Endothelial cell of umbilical vein (primary cell): ENCODE measurements at regions of chr9 and their contacts with region 1.

Region 1: DNA sequence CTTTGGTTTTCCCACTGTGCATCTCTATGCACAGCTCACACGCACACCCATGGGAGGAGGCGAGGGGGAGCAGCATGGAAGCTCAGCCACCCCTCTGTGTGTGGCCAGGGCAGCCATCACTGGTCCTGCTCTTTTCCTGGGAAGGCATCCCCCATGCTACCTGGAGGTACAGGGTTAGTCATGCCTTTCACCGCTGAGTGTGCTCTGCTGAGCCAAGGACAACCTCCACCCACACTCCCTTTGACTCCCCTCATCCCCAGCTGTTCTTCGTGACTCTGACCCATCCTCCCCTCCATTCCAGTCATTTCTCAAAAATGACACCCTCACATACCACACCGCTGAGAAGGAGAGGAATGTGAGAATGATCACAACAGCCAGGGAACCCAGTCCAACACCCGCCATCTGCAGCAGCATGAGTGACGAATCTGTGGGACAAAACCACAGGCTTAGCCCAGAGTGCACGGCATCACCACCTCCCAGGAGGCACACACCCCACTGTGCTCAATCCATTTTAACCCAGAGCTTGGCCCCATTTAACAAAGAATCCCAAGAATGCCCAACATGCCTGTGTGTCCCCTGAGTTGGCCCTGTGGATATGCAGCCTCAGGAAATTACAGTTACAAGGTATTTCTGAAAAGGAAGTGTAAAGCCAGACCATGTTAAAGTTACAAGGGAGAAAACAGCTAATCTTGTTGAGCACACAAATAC is 133.4 kb downstream of the SUSD1 start:
- DNase-seq: peak; percentile 83
- H3K4me3 ChIP-seq: no peak overlapping the region
- H3K27ac ChIP-seq: peak overlapping the region; percentile 83
- H3K4me1 ChIP-seq: peaks cover 30% of the 10 kb centered on the region
- H3K27me3 ChIP-seq: no peaks in the 10 kb centered on the region
- CTCF ChIP-seq: no peak
- POLR2A ChIP-seq: no peak

Region 2: GRCh38 chr9:112012026-112012902 is 29.4 kb before region 1 on chr9:
- CTCF ChIA-PET with region 1: interaction called, 4 read pairs
- POLR2A ChIA-PET with region 1: no interaction called
- dilution Hi-C with region 1: no loop called
- intact Hi-C with region 1: loop called (anchors 1 kb)
- DNase-seq: peak; percentile 94
- H3K4me3 ChIP-seq: no peak overlapping the region
- H3K27ac ChIP-seq: peak overlapping the region; percentile 95
- H3K4me1 ChIP-seq: peaks cover 22% of the 10 kb centered on the region
- H3K27me3 ChIP-seq: no peaks in the 10 kb centered on the region
- CTCF ChIP-seq: no peak
- POLR2A ChIP-seq: peak; percentile 26

Region 3: GRCh38 chr9:112029921-112030444 is 11.7 kb before region 1 on chr9:
- CTCF ChIA-PET with region 1: interaction called, 5 read pairs
- POLR2A ChIA-PET with region 1: interaction called, 3 read pairs
- dilution Hi-C with region 1: no loop called
- intact Hi-C with region 1: loop called (anchors 1 kb)
- DNase-seq: peak; percentile 86
- H3K4me3 ChIP-seq: no peak overlapping the region
- H3K27ac ChIP-seq: peak overlapping the region; percentile 52
- H3K4me1 ChIP-seq: peaks cover 29% of the 10 kb centered on the region
- H3K27me3 ChIP-seq: no peaks in the 10 kb centered on the region
- CTCF ChIP-seq: no peak
- POLR2A ChIP-seq: no peak